Vagina (tissue), 2 donors: ENCODE measurements at regions of chr18 and their contacts with region 1.

Region 1: GRCh38 chr18:32072321-32072720 is 19.4 kb upstream of the RNF138 start:
- DNase-seq: no peak
- H3K4me3 ChIP-seq: no peak overlapping the region
- H3K27ac ChIP-seq: no peak overlapping the region
- H3K4me1 ChIP-seq: no peaks in the 10 kb centered on the region
- H3K27me3 ChIP-seq: no peaks in the 10 kb centered on the region
- CTCF ChIP-seq: peak in 1 of 3 experiments; percentile 11
- POLR2A ChIP-seq: no peak

Region 2: GRCh38 chr18:31658670-31659575 is 413.4 kb before region 1 on chr18:
- intact Hi-C with region 1: no loop called
- DNase-seq: no peak
- H3K4me3 ChIP-seq: no peak overlapping the region
- H3K27ac ChIP-seq: no peak overlapping the region
- H3K4me1 ChIP-seq: no peaks in the 10 kb centered on the region
- H3K27me3 ChIP-seq: no peaks in the 10 kb centered on the region
- CTCF ChIP-seq: no peak
- POLR2A ChIP-seq: no peak

Region 3: GRCh38 chr18:32048507-32049091 is 23.7 kb before region 1 on chr18:
- intact Hi-C with region 1: loop called (anchors 1 kb)
- DNase-seq: no peak
- H3K4me3 ChIP-seq: no peak overlapping the region
- H3K27ac ChIP-seq: no peak overlapping the region
- H3K4me1 ChIP-seq: peaks cover 11% of the 10 kb centered on the region
- H3K27me3 ChIP-seq: no peaks in the 10 kb centered on the region
- CTCF ChIP-seq: no peak
- POLR2A ChIP-seq: no peak